Endothelial cell of umbilical vein (primary cell): ENCODE measurements at regions of chr20 and their contacts with region 1.

Region 1: GRCh38 chr20:44609511-44610312 is 27.3 kb downstream of the PKIG start:
- DNase-seq: peak; percentile 91
- H3K4me3 ChIP-seq: no peak overlapping the region
- H3K27ac ChIP-seq: peak overlapping the region; percentile 53
- H3K4me1 ChIP-seq: peaks cover 16% of the 10 kb centered on the region
- H3K27me3 ChIP-seq: no peaks in the 10 kb centered on the region
- CTCF ChIP-seq: peak; percentile 97 to 98
- POLR2A ChIP-seq: no peak

Region 2: GRCh38 chr20:44475694-44476560 is 133.8 kb before region 1 on chr20 and contains the start of gene TTPAL:
- CTCF ChIA-PET with region 1: interaction called, 5 read pairs
- POLR2A ChIA-PET with region 1: no interaction called
- dilution Hi-C with region 1: no loop called
- intact Hi-C with region 1: loop called (anchors 1 kb)
- DNase-seq: peak; percentile 83
- H3K4me3 ChIP-seq: peak within 1 kb of the TSS; percentile 42 to 68 (median 52)
- H3K27ac ChIP-seq: peak within 1 kb of the TSS; percentile 56
- H3K4me1 ChIP-seq: peaks cover 13% of the 10 kb centered on the region
- H3K27me3 ChIP-seq: peaks cover 0 to 4% of the 10 kb centered on the region in 2 experiments
- CTCF ChIP-seq: peak; percentile 4 to 28
- POLR2A ChIP-seq: peak; percentile 91
- total RNA-seq, gene TTPAL: 8.0 and 8.7 TPM in 2 replicates

Region 3: DNA sequence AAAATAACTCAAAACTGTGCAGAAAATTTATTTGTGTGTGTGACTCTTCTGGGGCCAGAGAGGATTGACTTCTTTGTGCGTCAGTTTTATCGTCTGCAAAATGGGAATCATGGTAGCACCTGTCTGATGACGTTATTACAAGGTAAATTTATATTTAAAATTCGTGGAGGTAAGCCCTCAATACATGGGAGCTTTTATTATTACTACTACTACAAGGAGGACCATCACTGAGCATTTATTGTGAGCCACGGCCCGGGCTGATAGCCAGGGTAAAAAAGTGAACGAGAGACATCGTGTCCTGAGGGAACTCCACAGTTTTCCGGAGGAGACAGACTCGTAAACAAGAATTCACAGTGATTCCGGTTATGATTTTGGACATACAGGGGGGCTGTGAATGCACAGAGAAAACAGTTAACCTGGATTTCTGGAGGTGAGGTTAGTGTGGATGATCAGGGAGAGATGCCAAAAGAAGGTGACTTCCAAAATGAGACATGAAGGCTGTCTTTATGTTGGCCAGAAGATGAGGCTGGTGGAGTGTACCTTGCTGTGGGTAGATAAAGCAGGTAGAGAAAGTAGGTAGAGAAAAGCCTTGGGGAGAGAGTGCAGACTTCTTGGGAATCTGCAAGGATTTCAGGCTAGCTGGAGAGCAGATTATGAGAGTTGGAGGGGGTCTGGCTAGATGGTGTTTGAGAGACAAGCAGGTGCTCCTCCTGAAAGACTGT is 77.3 kb before region 1 on chr20:
- CTCF ChIA-PET with region 1: interaction called, 9 read pairs
- POLR2A ChIA-PET with region 1: no interaction called
- dilution Hi-C with region 1: no loop called
- intact Hi-C with region 1: loop called (anchors 1 kb)
- DNase-seq: peak; percentile 52
- H3K4me3 ChIP-seq: peak overlapping the region; percentile 80 to 92 (median 85)
- H3K27ac ChIP-seq: peak overlapping the region; percentile 78
- H3K4me1 ChIP-seq: peaks cover 20% of the 10 kb centered on the region
- H3K27me3 ChIP-seq: no peaks in the 10 kb centered on the region
- CTCF ChIP-seq: no peak
- POLR2A ChIP-seq: peak; percentile 20

Region 4: DNA sequence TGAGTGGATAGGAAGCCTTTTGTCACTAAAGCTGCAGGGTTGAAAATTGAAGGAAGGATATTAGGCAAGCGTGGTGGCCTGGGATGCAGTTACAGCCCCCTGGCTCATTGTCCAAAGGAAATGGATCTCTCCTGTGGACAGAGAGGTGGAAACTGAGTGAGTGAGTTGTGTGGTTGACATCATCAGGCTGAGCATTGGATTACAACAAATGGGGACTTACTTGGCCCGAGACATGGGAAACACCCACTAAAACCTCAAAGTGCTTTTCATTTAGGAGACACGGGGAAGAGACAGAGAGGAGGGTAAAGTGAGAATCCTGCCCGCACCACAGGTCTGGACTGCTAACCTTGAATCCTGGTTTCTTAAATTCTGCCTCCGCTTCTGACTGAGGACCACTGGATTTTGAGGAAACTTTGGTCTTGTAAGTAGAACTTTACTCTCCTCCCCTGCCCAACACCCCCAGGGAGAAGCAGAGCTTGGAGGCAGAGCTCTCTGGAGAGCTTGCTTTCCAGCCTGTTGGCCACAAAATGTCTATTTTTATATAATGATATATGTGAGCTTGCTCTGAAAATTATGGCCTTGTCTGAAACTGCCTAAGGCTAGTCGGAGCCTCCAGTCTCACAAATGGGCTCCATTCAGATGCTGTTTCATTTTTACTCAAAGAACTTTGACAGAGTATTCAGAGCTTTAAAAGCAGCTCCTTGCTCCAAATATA is 27.2 kb before region 1 on chr20 and contains the start of gene PKIG:
- CTCF ChIA-PET with region 1: interaction called, 58 read pairs
- POLR2A ChIA-PET with region 1: no interaction called
- dilution Hi-C with region 1: no loop called
- intact Hi-C with region 1: loop called (anchors 1 kb)
- DNase-seq: peak; percentile 96
- H3K4me3 ChIP-seq: peak within 1 kb of the TSS; percentile 48 to 94 (median 84)
- H3K27ac ChIP-seq: peak within 1 kb of the TSS; percentile 96
- H3K4me1 ChIP-seq: peaks cover 83% of the 10 kb centered on the region
- H3K27me3 ChIP-seq: no peaks in the 10 kb centered on the region
- CTCF ChIP-seq: no peak
- POLR2A ChIP-seq: peak; percentile 84
- total RNA-seq, gene PKIG: 127 and 135 TPM in 2 replicates

Region 5: DNA sequence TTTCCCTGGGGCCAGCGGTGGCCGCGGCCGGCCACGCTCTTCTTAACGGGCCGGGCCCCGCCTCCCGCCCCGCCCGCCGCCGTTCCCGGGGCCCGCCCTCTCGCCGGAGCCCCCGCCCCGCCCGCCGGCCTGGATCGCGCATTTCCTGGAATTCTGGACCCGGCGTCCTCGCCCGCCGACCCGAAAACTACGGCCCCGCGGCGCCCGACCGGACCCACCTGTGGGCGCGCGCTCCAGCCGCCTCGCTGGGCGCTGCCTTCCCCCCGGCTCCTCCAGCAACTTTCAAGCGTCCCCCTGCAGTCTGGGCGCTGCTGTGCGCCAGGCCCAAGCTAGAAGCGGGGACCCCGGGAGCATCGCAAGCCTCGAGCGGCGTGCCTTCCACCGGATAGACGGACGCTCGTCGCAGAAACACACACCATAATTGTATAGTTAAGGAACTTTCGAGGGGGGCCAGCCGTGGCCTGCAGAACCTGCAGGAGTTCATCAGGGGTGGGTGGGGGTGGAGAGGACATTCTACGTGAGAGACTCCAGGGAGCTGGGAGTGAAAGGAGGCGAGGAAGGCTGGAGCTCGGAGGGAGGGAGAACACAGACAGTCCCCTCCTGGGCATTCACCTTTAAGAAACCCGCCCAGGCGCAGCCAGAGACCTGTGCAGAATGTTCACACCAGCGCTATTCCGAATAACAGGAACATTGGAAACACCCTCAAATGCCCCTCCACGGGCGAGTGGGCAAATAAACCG is 42.1 kb after region 1 on chr20 and contains the start of gene ADA:
- CTCF ChIA-PET with region 1: interaction called, 3 read pairs
- POLR2A ChIA-PET with region 1: no interaction called
- dilution Hi-C with region 1: no loop called
- intact Hi-C with region 1: loop called (anchors 5 kb)
- DNase-seq: peak; percentile 71
- H3K4me3 ChIP-seq: peak within 1 kb of the TSS; percentile 48 to 88 (median 51)
- H3K27ac ChIP-seq: no peak within 1 kb of the TSS
- H3K4me1 ChIP-seq: peaks cover 8% of the 10 kb centered on the region
- H3K27me3 ChIP-seq: peaks cover 16 to 19% of the 10 kb centered on the region in 2 experiments
- CTCF ChIP-seq: no peak
- POLR2A ChIP-seq: no peak
- total RNA-seq, gene ADA: 26.3 and 33.2 TPM in 2 replicates